Mammary epithelial cell (primary cell): ENCODE measurements at regions of chrX and their contacts with region 1.

Region 1: GRCh38 chrX:102599084-102599950 is at the start of gene ARMCX5:
- DNase-seq: peak; percentile 79
- H3K4me3 ChIP-seq: peak within 1 kb of the TSS; percentile 37 to 62 (median 59)
- H3K27ac ChIP-seq: peak within 1 kb of the TSS; percentile 58
- H3K4me1 ChIP-seq: peaks cover 6% of the 10 kb centered on the region
- H3K27me3 ChIP-seq: no peaks in the 10 kb centered on the region
- CTCF ChIP-seq: peak in 1 of 2 donors; percentile 12
- total RNA-seq, gene ARMCX5: 8.2 to 17.3 TPM

Region 2: GRCh38 chrX:102515975-102516941 is 83.1 kb before region 1 on chrX and contains the start of gene TMSB15A:
- CTCF ChIA-PET with region 1: interaction called, 14 read pairs
- dilution Hi-C with region 1: no loop called
- in situ Hi-C with region 1: no loop called
- intact Hi-C with region 1: no loop called
- DNase-seq: peak; percentile 28
- H3K4me3 ChIP-seq: peak within 1 kb of the TSS in 2 of 3 experiments; percentile 39 to 46
- H3K27ac ChIP-seq: no peak within 1 kb of the TSS
- H3K4me1 ChIP-seq: peaks cover 4% of the 10 kb centered on the region
- H3K27me3 ChIP-seq: no peaks in the 10 kb centered on the region
- CTCF ChIP-seq: no peak
- total RNA-seq, gene TMSB15A: 1.4 TPM in 1 of 2 donors, not detected in the other

Region 3: DNA sequence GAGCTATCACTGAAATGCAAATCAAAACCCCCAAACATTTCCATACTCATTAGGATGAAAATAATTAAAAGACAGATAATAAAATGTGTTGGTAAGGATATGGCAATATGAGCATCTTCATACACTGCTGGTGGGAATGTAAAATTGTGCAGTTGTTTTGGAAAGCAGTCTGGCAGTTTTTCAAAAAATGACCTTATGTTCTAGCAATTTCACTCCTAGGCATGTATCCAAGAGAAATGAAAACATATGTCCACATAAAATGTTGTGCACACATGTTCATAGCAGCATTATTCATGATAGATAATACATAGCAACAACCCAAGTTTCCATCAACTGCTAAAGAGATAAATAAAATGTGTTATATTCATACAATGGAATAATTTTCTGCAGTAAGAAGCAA is 98.2 kb after region 1 on chrX:
- CTCF ChIA-PET with region 1: no interaction called
- dilution Hi-C with region 1: no loop called
- in situ Hi-C with region 1: no loop called
- intact Hi-C with region 1: no loop called
- DNase-seq: no peak
- H3K4me3 ChIP-seq: no peak overlapping the region
- H3K27ac ChIP-seq: no peak overlapping the region
- H3K4me1 ChIP-seq: no peaks in the 10 kb centered on the region
- H3K27me3 ChIP-seq: no peaks in the 10 kb centered on the region
- CTCF ChIP-seq: no peak

Region 4: GRCh38 chrX:102720237-102721168 is 121.2 kb after region 1 on chrX and contains the start of gene GPRASP3:
- CTCF ChIA-PET with region 1: no interaction called
- dilution Hi-C with region 1: no loop called
- in situ Hi-C with region 1: no loop called
- intact Hi-C with region 1: loop called (anchors 10 kb)
- DNase-seq: peak; percentile 63
- H3K4me3 ChIP-seq: peak within 1 kb of the TSS; percentile 26 to 47 (median 44)
- H3K27ac ChIP-seq: no peak within 1 kb of the TSS
- H3K4me1 ChIP-seq: no peaks in the 10 kb centered on the region
- H3K27me3 ChIP-seq: no peaks in the 10 kb centered on the region
- CTCF ChIP-seq: no peak
- total RNA-seq, gene GPRASP3: 3.3 to 3.4 TPM

Region 5: GRCh38 chrX:102835504-102836146 is 236.3 kb after region 1 on chrX:
- CTCF ChIA-PET with region 1: no interaction called
- dilution Hi-C with region 1: no loop called
- in situ Hi-C with region 1: no loop called
- intact Hi-C with region 1: loop called (anchors 1 kb)
- DNase-seq: peak; percentile 23
- H3K4me3 ChIP-seq: no peak overlapping the region
- H3K27ac ChIP-seq: no peak overlapping the region
- H3K4me1 ChIP-seq: no peaks in the 10 kb centered on the region
- H3K27me3 ChIP-seq: no peaks in the 10 kb centered on the region
- CTCF ChIP-seq: peak; percentile 68 to 75

Region 6: DNA sequence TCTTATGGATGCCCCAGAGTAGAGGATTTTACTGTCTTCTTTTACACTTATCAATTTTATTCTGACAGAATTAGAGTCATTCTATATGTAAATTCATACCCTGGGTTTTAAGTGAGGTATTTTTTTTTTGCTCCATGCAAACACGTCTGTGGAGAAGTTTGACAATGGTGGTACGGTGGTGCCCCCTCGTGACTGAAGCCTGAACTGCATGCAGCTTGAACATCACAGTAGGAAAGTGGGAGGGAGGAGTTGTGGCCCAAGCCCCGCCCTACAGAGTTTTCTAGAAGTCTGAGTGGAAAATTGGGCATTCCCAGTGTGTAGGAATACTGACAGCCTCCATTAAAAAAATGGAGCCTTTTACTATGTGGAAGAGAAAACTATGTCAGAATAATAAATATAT is 264.4 kb after region 1 on chrX:
- CTCF ChIA-PET with region 1: interaction called, 16 read pairs
- dilution Hi-C with region 1: no loop called
- in situ Hi-C with region 1: no loop called
- intact Hi-C with region 1: loop called (anchors 1 kb)
- DNase-seq: peak; percentile 71
- H3K4me3 ChIP-seq: no peak overlapping the region
- H3K27ac ChIP-seq: no peak overlapping the region
- H3K4me1 ChIP-seq: no peaks in the 10 kb centered on the region
- H3K27me3 ChIP-seq: no peaks in the 10 kb centered on the region
- CTCF ChIP-seq: peak; percentile 85 to 99